Activated T-helper 2 cell treated with anti-CD3 and anti-CD28 coated beads, Interferon-gamma antibody, Interleukin-2, Interleukin-4, amounts not matched to agents 10 μg/mL and 5 μg/mL and 100 μg/mL, durations not matched to agents 14 hours and 24 hours and 36 hours (primary cell): ENCODE measurements at regions of chr11 and their contacts with region 1.

Region 1: GRCh38 chr11:18105802-18106574 is at the start of gene SAAL1:
- DNase-seq: peak; percentile 86
- H3K4me3 Mint-ChIP-seq: peak within 1 kb of the TSS; percentile 90
- H3K27ac Mint-ChIP-seq: peak within 1 kb of the TSS; percentile 86
- H3K4me1 Mint-ChIP-seq: peaks cover 29% of the 10 kb centered on the region
- H3K27me3 Mint-ChIP-seq: peaks cover 5% of the 10 kb centered on the region
- total RNA-seq, gene SAAL1: 37.8 and 44.1 TPM in 2 replicates

Region 2: GRCh38 chr11:17730608-17731462 is 375.2 kb before region 1 on chr11:
- intact Hi-C with region 1: loop called (anchors 10 kb)
- DNase-seq: peak; percentile 51
- H3K4me3 Mint-ChIP-seq: no peak overlapping the region
- H3K27ac Mint-ChIP-seq: no peak overlapping the region
- H3K4me1 Mint-ChIP-seq: no peaks in the 10 kb centered on the region
- H3K27me3 Mint-ChIP-seq: peaks cover 60% of the 10 kb centered on the region

Region 3: GRCh38 chr11:17991783-17992433 is 114.1 kb before region 1 on chr11:
- intact Hi-C with region 1: loop called (anchors 1 kb)
- DNase-seq: no peak
- H3K4me3 Mint-ChIP-seq: no peak overlapping the region
- H3K27ac Mint-ChIP-seq: no peak overlapping the region
- H3K4me1 Mint-ChIP-seq: peaks cover 2% of the 10 kb centered on the region
- H3K27me3 Mint-ChIP-seq: no peaks in the 10 kb centered on the region

Region 4: DNA sequence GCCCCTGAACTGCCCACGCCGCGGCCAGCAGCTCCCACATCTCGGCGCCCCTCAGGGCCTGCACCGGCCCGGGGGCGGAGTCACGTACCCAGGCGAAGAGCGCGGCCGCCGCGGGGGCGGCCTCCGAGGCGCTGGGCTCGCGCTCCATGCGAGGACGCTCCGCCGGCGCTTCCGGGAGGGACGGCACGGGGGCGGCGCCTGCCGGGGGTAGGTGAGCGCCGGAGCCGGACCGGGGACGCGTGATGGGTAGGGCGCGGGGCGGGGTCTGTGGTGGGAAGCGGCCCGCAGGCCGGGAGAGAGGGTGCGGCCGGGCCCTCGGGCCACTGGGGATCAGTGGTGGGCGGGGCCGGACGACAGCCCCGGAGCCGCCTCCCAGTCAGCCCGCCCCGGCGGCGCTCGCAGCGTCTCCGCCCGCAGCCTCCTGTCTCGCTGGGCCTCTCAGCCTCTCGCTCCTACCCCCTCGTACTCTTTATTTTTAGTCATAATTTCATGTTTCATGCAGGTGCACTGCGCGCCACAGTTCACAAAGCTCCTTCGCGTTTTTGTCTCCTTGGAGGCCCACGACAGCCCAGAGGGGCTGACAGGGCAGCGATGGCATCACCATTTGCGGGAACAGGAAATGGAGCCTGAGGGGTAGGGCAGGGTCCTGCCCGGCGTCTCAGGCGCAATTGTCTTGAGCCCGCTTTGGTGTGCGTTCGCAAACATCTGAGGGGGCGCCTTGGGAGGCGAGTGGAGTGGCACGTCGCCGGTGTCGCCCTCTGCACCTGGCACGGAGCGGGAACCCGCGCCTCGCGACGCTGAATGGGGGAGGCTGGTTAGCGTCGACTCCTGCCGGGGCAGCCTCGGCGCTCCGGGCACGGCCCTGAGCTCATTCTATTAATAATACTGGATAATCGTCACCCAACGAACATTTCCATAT is 92.9 kb before region 1 on chr11 and contains the start of gene SERGEF:
- intact Hi-C with region 1: loop called (anchors 1 kb)
- DNase-seq: peak; percentile 93
- H3K4me3 Mint-ChIP-seq: peak within 1 kb of the TSS; percentile 99
- H3K27ac Mint-ChIP-seq: peak within 1 kb of the TSS; percentile 91
- H3K4me1 Mint-ChIP-seq: peaks cover 33% of the 10 kb centered on the region
- H3K27me3 Mint-ChIP-seq: no peaks in the 10 kb centered on the region
- total RNA-seq, gene SERGEF: 39.5 and 43.9 TPM in 2 replicates

Region 5: DNA sequence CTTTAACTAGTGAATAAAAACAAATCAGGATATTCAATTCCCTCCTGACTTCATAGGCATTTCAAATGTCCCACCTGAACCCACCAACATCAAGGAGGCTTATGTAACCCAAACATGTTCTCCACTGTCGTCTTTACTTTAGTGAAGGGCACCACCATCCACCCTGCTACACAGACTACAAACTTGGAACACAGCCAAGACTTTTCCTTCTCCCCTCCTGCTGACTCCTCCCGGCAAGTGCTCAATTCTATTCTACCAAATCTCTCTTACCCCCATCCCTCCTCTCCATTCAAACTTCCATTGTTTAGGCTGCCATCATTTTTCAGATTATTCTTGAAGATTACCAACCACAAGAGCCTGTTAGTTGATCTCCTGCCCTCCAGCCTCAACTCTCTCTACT is 24.4 kb before region 1 on chr11:
- intact Hi-C with region 1: no loop called
- DNase-seq: no peak
- H3K4me3 Mint-ChIP-seq: no peak overlapping the region
- H3K27ac Mint-ChIP-seq: no peak overlapping the region
- H3K4me1 Mint-ChIP-seq: no peaks in the 10 kb centered on the region
- H3K27me3 Mint-ChIP-seq: no peaks in the 10 kb centered on the region

Region 6: GRCh38 chr11:18151581-18151980 is 45.6 kb after region 1 on chr11:
- intact Hi-C with region 1: no loop called
- DNase-seq: no peak
- H3K4me3 Mint-ChIP-seq: no peak overlapping the region
- H3K27ac Mint-ChIP-seq: no peak overlapping the region
- H3K4me1 Mint-ChIP-seq: no peaks in the 10 kb centered on the region
- H3K27me3 Mint-ChIP-seq: peaks cover 21% of the 10 kb centered on the region

Region 7: DNA sequence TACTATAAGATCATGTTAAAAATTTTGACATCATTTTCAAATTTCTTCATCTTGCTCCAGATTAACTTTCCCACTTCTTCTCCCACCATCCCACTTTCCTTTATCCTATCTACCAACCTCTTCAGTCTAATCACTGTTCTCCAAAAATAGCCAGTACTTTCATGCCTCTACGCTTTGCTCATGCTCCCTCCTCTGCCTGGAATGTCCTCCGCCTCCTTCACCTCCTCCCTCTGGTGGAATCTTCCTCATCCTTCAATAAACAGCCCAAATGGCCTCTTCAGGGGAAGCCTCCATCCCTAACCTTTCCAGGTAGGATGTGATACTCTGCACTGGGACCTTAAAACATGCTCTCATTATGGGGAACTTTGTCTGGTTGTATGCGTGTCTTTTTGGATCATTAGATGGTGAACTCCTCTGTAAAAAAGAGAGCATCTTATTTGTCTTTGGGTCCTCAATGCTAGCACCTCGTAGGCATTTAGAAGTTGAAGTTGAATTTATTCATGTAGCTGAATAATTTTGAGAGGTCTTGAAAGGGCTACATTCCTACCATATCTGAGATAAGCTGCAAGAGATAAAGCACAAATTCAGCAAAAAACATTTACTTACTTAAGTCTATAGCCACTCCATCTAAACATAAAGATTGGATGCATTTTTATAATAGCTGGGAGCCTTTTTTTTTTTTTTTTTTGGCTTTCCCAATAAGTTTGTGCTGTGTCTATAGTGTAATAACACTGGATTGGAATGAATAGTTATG is 1103.8 kb after region 1 on chr11:
- intact Hi-C with region 1: no loop called
- DNase-seq: no peak
- H3K4me3 Mint-ChIP-seq: no peak overlapping the region
- H3K27ac Mint-ChIP-seq: no peak overlapping the region
- H3K4me1 Mint-ChIP-seq: no peaks in the 10 kb centered on the region
- H3K27me3 Mint-ChIP-seq: peaks cover 33% of the 10 kb centered on the region